ENCODE measurements at regions of chr1 and their contacts with region 1.

Region 1: DNA sequence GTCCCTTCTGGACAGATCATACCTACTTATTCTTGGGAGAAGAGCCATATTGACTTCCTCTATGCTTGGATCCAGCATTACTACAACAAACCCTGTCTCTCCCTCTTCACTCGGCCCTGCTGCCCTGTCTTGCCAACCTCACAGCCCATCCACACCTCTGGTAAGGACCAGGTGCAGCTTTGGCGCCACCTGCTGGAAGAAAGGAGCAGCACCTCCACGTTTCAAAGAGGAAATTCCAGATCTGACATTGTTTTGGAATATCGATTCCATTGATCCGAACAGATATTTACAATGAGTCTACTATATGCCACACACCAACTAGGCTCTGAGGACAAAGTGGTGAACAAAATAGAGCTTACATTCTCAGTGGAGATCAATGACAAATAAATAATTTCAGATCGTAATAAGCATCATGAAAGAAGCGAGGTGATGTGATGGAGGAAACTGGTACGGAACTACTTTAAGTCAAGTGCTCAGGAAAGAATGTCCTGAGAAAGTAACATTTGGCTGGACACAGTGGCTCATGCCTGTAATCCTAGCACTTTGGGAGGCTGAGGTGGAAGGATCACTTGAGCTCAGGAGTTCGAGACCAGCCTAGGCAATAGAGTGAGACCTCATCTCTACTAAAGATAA is 18.7 kb downstream of the MFSD2A start:
- DNase-seq: peak; percentile 81 to 86 (median 82)
- ATAC-seq: peak; percentile 84 to 91 (median 87)
- H3K4me3 ChIP-seq: no peak overlapping the region
- H3K27ac ChIP-seq: no peak overlapping the region
- H3K4me1 ChIP-seq: peaks cover 0 to 3% (median 0%) of the 10 kb centered on the region in 4 donors
- H3K27me3 ChIP-seq: no peaks in the 10 kb centered on the region
- CTCF ChIP-seq: peak; percentile 94 to 97 (median 96)
- POLR2A ChIP-seq: no peak

Region 2: GRCh38 chr1:39919545-39919944 is 54.1 kb before region 1 on chr1:
- intact Hi-C with region 1: loop called (anchors 5 kb)
- DNase-seq: peak in 1 of 3 donors; percentile 42
- ATAC-seq: peak; percentile 77 to 85 (median 83)
- H3K4me3 ChIP-seq: no peak overlapping the region
- H3K27ac ChIP-seq: no peak overlapping the region
- H3K4me1 ChIP-seq: peaks cover 0 to 10% (median 2%) of the 10 kb centered on the region in 4 donors
- H3K27me3 ChIP-seq: no peaks in the 10 kb centered on the region
- CTCF ChIP-seq: peak; percentile 54 to 78 (median 62)
- POLR2A ChIP-seq: no peak

Region 3: DNA sequence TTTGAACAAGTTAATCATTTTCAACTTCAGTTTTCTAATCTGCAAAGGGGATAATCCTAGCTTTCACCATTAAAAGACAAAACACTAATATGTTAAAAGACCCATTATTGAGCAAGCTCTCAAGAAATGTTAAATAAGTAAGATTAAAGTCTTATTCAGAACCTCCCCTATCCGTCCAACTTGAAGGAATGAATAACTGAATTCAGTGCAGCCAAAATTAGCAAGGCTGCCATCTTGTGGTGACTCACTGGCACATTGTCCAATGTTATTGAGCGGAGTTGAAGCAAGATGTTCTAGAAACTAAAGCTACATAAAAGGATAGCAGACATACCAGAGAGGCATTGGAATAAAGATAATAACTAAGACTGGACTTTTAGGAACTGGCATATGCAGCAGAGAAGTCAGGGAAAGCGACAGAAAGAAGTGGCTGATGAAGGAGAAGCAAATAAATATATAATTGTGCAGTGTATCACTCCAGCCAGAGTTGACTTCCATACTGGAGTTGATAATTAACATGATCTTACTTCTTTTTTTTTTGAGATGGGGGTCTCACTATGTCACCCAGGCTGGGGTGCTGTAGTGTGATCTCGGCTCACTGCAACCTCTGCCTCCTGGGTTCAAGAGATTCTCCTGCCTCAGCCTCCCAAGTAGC is 58.7 kb after region 1 on chr1:
- intact Hi-C with region 1: no loop called
- DNase-seq: peak in 1 of 3 donors; percentile 57
- ATAC-seq: peak; percentile 71 to 83 (median 77)
- H3K4me3 ChIP-seq: no peak overlapping the region
- H3K27ac ChIP-seq: no peak overlapping the region
- H3K4me1 ChIP-seq: peaks cover 0 to 3% (median 0%) of the 10 kb centered on the region in 4 donors
- H3K27me3 ChIP-seq: no peaks in the 10 kb centered on the region
- CTCF ChIP-seq: peak; percentile 61 to 86 (median 71)
- POLR2A ChIP-seq: no peak